Cardiac septum (tissue), 1 donor: ENCODE measurements at regions of chr14 and their contacts with region 1.

Region 1: GRCh38 chr14:28751467-28752058 is 15.0 kb upstream of the FOXG1 start:
- DNase-seq: no peak

Region 2: DNA sequence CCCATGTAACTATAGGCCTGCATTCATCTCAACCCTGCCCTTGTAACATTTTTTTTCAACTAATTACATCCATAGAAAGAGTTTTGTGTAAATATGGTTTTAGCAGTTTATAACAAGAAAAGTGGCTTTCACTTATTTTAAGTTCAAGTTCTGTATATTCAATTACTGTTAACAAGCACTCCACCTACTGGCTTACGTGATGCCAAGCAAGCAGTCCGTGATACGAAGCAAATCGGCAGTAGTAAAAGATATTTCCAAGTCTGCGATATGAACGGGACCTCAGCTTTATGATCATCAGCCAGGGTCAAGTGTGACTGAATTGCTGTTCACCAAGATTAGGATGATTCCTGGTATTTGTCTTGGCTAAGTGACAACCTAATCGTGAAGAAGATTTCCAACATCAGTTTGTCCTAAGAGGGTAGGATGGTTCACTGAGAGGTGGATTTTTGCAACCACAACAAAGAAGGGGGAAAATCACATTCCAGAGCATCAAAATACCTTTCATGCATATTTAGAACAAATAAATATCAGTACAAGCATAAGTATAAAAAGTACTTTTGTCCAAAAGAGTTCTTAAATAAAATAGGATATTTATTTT is 471.2 kb after region 1 on chr14:
- intact Hi-C with region 1: loop called (anchors 10 kb)
- DNase-seq: no peak

Region 3: GRCh38 chr14:29536886-29537511 is 785.4 kb after region 1 on chr14:
- intact Hi-C with region 1: loop called (anchors 5 kb)
- DNase-seq: no peak